CD8-positive, alpha-beta T cell (primary cell): ENCODE measurements at regions of chr2 and their contacts with region 1.

Region 1: GRCh38 chr2:236343400-236344161 is 79.4 kb upstream of the ASB18 start:
- DNase-seq: peak in 8 of 9 experiments; percentile 27 to 73 (median 47)
- ATAC-seq: peak; percentile 57
- H3K4me3 ChIP-seq: no peak overlapping the region
- H3K4me3 Mint-ChIP-seq: no peak overlapping the region
- H3K27ac ChIP-seq: no peak overlapping the region
- H3K27ac Mint-ChIP-seq: no peak overlapping the region
- H3K4me1 ChIP-seq: no peaks in the 10 kb centered on the region
- H3K4me1 Mint-ChIP-seq: no peaks in the 10 kb centered on the region
- H3K27me3 ChIP-seq: no peaks in the 10 kb centered on the region
- H3K27me3 Mint-ChIP-seq: peaks cover 5% of the 10 kb centered on the region
- CTCF ChIP-seq: peak; percentile 86

Region 2: DNA sequence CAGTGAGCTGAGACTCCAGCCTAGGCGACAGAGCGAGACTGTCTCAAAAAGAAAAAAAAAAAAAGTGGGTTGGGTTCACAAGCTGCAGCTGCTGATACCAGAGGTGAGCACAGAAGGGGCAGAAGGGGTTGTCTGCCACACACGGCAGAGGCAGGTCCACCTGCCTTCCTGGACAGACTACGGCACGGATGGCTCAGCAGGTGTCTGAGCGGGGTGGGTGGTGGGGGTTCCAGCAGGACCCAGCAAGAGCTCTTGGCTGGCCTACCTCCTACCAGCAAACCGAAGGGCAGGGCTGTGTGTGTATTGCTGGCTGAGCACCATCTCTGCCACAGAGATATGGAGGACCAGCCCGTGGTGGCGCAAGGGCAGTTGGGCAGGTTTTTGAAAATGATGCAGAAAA is 51.0 kb after region 1 on chr2:
- CTCF ChIA-PET with region 1: no interaction called
- POLR2A ChIA-PET with region 1: no interaction called
- intact Hi-C with region 1: no loop called
- DNase-seq: no peak
- ATAC-seq: no peak
- H3K4me3 ChIP-seq: no peak overlapping the region
- H3K4me3 Mint-ChIP-seq: no peak overlapping the region
- H3K27ac ChIP-seq: no peak overlapping the region
- H3K27ac Mint-ChIP-seq: no peak overlapping the region
- H3K4me1 ChIP-seq: no peaks in the 10 kb centered on the region
- H3K4me1 Mint-ChIP-seq: no peaks in the 10 kb centered on the region
- H3K27me3 ChIP-seq: no peaks in the 10 kb centered on the region
- H3K27me3 Mint-ChIP-seq: peaks cover 7% of the 10 kb centered on the region
- CTCF ChIP-seq: no peak

Region 3: DNA sequence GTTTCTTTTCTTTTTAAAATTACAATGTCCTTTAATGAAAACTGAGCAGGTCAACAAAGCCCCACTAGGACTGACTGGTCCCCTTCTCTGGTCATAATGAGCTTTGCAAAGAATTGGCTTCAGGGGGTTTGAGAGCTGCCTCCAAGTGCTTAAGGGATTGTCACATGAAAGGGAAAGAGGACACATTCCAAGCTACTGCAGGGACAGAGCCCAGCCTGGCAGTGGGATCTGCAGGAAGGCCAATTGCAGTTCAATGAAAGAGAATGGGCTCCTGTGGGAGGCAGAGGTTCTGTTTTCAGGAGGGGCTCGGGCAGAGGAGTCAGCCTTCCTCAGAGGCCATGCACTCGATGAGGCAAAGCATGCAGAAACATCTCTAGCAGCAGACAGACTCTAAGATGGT is 141.9 kb after region 1 on chr2:
- CTCF ChIA-PET with region 1: no interaction called
- POLR2A ChIA-PET with region 1: no interaction called
- intact Hi-C with region 1: no loop called
- DNase-seq: no peak
- ATAC-seq: no peak
- H3K4me3 ChIP-seq: no peak overlapping the region
- H3K4me3 Mint-ChIP-seq: no peak overlapping the region
- H3K27ac ChIP-seq: no peak overlapping the region
- H3K27ac Mint-ChIP-seq: no peak overlapping the region
- H3K4me1 ChIP-seq: no peaks in the 10 kb centered on the region
- H3K4me1 Mint-ChIP-seq: no peaks in the 10 kb centered on the region
- H3K27me3 ChIP-seq: no peaks in the 10 kb centered on the region
- H3K27me3 Mint-ChIP-seq: peaks cover 2% of the 10 kb centered on the region
- CTCF ChIP-seq: no peak

Region 4: GRCh38 chr2:237072067-237072931 is 728.7 kb after region 1 on chr2:
- CTCF ChIA-PET with region 1: interaction called, 4 read pairs
- POLR2A ChIA-PET with region 1: no interaction called
- intact Hi-C with region 1: loop called (anchors 1 to 2 kb)
- DNase-seq: peak; percentile 47 to 83 (median 69)
- ATAC-seq: peak; percentile 48
- H3K4me3 ChIP-seq: no peak overlapping the region
- H3K4me3 Mint-ChIP-seq: no peak overlapping the region
- H3K27ac ChIP-seq: no peak overlapping the region
- H3K27ac Mint-ChIP-seq: no peak overlapping the region
- H3K4me1 ChIP-seq: no peaks in the 10 kb centered on the region
- H3K4me1 Mint-ChIP-seq: no peaks in the 10 kb centered on the region
- H3K27me3 ChIP-seq: no peaks in the 10 kb centered on the region
- H3K27me3 Mint-ChIP-seq: no peaks in the 10 kb centered on the region
- CTCF ChIP-seq: peak; percentile 98